ENCODE measurements at regions of chr5 and their contacts with region 1.

Region 1: GRCh38 chr5:124574521-124575436 is 171.7 kb downstream of the ZNF608 start:
- DNase-seq: peak in 2 of 10 donors; percentile 19 to 56

Region 2: GRCh38 chr5:124402144-124402581 is 172.6 kb before region 1 on chr5:
- intact Hi-C with region 1: no loop called
- DNase-seq: peak in 1 of 10 donors; percentile 83

Region 3: GRCh38 chr5:124439609-124440008 is 135.2 kb before region 1 on chr5:
- intact Hi-C with region 1: loop called (anchors 2 kb)
- DNase-seq: no peak

Measured in posterior cingulate gyrus (tissue), 11 donors.